ENCODE measurements at regions of chr3 and their contacts with region 1.

Region 1: DNA sequence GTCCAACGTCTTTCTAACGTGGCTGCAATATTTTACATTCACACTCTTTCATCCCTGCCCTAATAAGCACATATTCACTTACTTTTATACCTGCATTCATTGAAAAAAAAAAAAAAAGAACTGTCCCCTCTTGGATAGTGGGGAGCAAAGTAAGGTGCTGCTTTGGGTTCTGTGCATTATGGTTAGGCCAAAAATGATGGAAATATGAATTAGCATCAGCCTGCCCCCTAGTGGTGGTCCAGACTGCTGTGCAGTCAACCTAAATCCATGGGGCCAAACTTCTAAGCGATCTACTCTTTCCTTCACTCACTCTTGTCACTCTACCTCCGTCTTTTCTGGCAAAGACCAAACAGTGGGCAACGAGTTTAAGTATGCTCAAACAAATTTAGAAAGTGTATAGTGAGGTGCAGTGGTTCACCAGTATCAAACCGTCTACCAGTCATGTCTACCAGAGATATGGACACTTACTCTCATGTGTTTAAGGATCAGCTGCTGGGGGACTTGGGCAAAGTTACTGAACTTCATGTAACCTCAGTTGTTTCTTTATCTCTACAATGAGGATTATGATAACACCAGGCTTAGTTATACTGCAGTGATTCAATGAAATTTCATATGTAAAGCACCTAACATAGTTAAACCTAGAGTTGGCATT is 61.5 kb upstream of the GRM7 start:
- DNase-seq: peak; percentile 58
- ATAC-seq: no peak
- H3K4me3 ChIP-seq: no peak overlapping the region
- H3K4me3 Mint-ChIP-seq: no peak overlapping the region
- H3K27ac ChIP-seq: no peak overlapping the region
- H3K27ac Mint-ChIP-seq: no peak overlapping the region
- H3K4me1 ChIP-seq: no peaks in the 10 kb centered on the region
- H3K4me1 Mint-ChIP-seq: no peaks in the 10 kb centered on the region
- H3K27me3 ChIP-seq: no peaks in the 10 kb centered on the region
- H3K27me3 Mint-ChIP-seq: peaks cover 3% of the 10 kb centered on the region
- CTCF ChIP-seq: peak; percentile 92

Region 2: DNA sequence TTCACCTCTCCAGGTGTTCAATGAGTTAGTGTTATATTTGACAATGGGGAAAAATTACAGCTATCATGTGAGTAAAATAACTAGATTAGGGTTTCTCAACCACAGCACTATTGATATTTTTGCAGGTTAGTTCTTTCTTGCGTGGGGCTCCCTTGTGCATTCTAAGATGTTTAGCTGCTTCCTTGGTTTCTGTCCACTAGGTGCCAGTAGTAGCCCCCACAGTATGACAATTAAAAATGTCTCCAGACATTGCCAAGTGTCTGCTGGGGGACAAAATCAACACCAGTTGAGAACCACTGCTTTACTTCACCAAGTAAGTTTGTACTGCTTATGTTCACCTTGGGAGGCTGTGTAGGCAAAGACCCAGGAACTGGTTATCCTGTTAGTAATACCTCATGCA is 993.2 kb before region 1 on chr3:
- CTCF ChIA-PET with region 1: no interaction called
- POLR2A ChIA-PET with region 1: no interaction called
- intact Hi-C with region 1: loop called (anchors 10 kb)
- DNase-seq: no peak
- ATAC-seq: no peak
- H3K4me3 ChIP-seq: no peak overlapping the region
- H3K4me3 Mint-ChIP-seq: no peak overlapping the region
- H3K27ac ChIP-seq: no peak overlapping the region
- H3K27ac Mint-ChIP-seq: no peak overlapping the region
- H3K4me1 ChIP-seq: no peaks in the 10 kb centered on the region
- H3K4me1 Mint-ChIP-seq: no peaks in the 10 kb centered on the region
- H3K27me3 ChIP-seq: no peaks in the 10 kb centered on the region
- H3K27me3 Mint-ChIP-seq: no peaks in the 10 kb centered on the region
- CTCF ChIP-seq: no peak

Region 3: DNA sequence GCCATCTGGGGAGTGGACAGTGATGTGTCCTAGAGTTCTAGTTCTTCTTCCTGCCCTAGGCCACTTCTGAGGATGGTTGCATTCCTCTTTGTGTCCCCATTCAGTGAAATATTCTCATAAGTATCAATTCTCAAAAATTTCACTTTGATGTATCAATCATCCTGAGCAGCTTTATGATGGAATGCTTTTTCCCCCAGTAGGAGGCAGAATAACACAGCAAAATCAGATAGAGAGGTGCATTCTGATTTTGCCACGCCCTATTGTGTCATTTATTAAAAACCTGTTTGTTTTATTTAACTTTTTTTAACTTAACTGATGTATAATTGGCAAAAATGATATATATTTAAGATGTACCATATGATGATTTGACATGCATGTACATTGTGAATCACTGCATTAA is 594.5 kb before region 1 on chr3:
- CTCF ChIA-PET with region 1: interaction called, 76 read pairs
- POLR2A ChIA-PET with region 1: no interaction called
- intact Hi-C with region 1: no loop called
- DNase-seq: peak; percentile 35
- ATAC-seq: no peak
- H3K4me3 ChIP-seq: no peak overlapping the region
- H3K4me3 Mint-ChIP-seq: no peak overlapping the region
- H3K27ac ChIP-seq: no peak overlapping the region
- H3K27ac Mint-ChIP-seq: no peak overlapping the region
- H3K4me1 ChIP-seq: no peaks in the 10 kb centered on the region
- H3K4me1 Mint-ChIP-seq: no peaks in the 10 kb centered on the region
- H3K27me3 ChIP-seq: no peaks in the 10 kb centered on the region
- H3K27me3 Mint-ChIP-seq: no peaks in the 10 kb centered on the region
- CTCF ChIP-seq: peak; percentile 77